ENCODE measurements at regions of chr17 and their contacts with region 1.

Region 1: GRCh38 chr17:74361230-74362068 is at the start of gene BTBD17:
- DNase-seq: peak; percentile 46 to 70
- ATAC-seq: peak; percentile 75 to 90 (median 82)
- H3K4me3 ChIP-seq: no peak within 1 kb of the TSS
- H3K27ac ChIP-seq: no peak within 1 kb of the TSS
- H3K4me1 ChIP-seq: peaks cover 0 to 18% (median 9%) of the 10 kb centered on the region in 9 donors
- H3K27me3 ChIP-seq: peaks cover 9 to 66% (median 61%) of the 10 kb centered on the region in 7 donors
- CTCF ChIP-seq: peak; percentile 52 to 83 (median 79)
- total RNA-seq, gene BTBD17: not detected

Region 2: DNA sequence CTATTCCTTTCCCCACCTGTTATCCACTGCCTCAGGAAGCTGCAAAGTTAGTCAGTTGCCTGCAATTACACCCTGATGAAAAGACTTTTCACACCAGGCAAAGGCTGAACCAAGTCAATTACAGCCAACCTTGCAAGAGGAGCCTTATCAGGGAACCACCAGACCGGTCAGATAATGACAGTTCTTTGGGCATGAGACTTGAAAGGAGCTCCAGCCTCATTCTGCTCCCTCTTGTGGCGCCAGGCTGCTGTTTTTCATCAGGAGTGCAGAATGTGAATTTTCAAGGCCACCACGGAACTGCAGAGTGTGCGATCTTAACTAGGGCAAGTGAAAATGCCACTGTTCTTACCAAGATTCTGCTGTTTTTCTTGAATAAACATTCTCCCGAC is 64.9 kb before region 1 on chr17:
- intact Hi-C with region 1: loop called in 5 of 10 experiments (anchors 1 to 5 kb)
- DNase-seq: peak; percentile 62 to 81
- ATAC-seq: peak; percentile 62 to 87 (median 82)
- H3K4me3 ChIP-seq: no peak overlapping the region
- H3K27ac ChIP-seq: peak overlapping the region; percentile 67 to 92 (median 83)
- H3K4me1 ChIP-seq: peaks cover 0 to 22% (median 8%) of the 10 kb centered on the region in 9 donors
- H3K27me3 ChIP-seq: peaks cover 0 to 5% (median 0%) of the 10 kb centered on the region in 7 donors
- CTCF ChIP-seq: peak; percentile 42 to 84 (median 65)

Measured in heart right ventricle (tissue), 16 donors.